ENCODE measurements at regions of chr3 and their contacts with region 1.

Region 1: GRCh38 chr3:149879872-149880271 is 66.9 kb downstream of the RNF13 start:
- DNase-seq: no peak
- H3K4me3 ChIP-seq: no peak overlapping the region
- CTCF ChIP-seq: peak; percentile 68

Region 2: GRCh38 chr3:149850787-149851584 is 28.9 kb before region 1 on chr3:
- CTCF ChIA-PET with region 1: interaction called, 14 read pairs
- POLR2A ChIA-PET with region 1: no interaction called
- DNase-seq: no peak
- H3K4me3 ChIP-seq: no peak overlapping the region
- CTCF ChIP-seq: no peak

Region 3: GRCh38 chr3:149902498-149903139 is 22.7 kb after region 1 on chr3:
- CTCF ChIA-PET with region 1: interaction called, 20 read pairs
- POLR2A ChIA-PET with region 1: no interaction called
- DNase-seq: no peak
- H3K4me3 ChIP-seq: no peak overlapping the region
- CTCF ChIP-seq: no peak

Region 4: GRCh38 chr3:149936812-149937233 is 57.0 kb after region 1 on chr3:
- CTCF ChIA-PET with region 1: interaction called, 15 read pairs
- POLR2A ChIA-PET with region 1: no interaction called
- DNase-seq: no peak
- H3K4me3 ChIP-seq: no peak overlapping the region
- CTCF ChIP-seq: peak; percentile 72

Region 5: DNA sequence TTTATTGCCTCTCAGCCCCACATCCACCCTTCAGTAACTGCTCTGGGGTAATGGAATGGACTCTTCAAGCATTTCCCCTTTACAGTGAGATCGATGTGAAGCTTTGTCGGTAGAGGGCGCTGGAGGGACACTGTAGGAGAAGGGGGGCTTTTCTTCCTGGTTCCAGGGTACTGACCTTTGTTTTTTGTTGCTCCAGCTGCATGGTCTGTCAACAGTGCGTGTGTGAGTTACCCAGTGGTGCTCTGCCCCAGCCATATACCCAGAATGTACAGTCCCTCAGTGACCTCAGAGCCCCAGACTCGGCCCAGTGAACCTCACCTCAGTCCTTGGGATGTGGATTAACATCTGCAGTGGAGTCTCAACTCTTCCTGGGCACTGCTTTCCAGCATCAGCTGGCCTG is 348.0 kb after region 1 on chr3:
- CTCF ChIA-PET with region 1: interaction called, 10 read pairs
- POLR2A ChIA-PET with region 1: no interaction called
- DNase-seq: no peak
- H3K4me3 ChIP-seq: no peak overlapping the region
- CTCF ChIP-seq: peak; percentile 84

Measured in AG04449 (cell line).